ENCODE measurements at regions of chr1 and their contacts with region 1.

Region 1: GRCh38 chr1:32716312-32717148 is 14.0 kb upstream of the SYNC start:
- DNase-seq: peak; percentile 83
- CTCF ChIP-seq: no peak

Region 2: GRCh38 chr1:32521165-32521564 is 195.4 kb before region 1 on chr1:
- CTCF ChIA-PET with region 1: interaction called, 21 read pairs
- POLR2A ChIA-PET with region 1: interaction called, 4 read pairs
- DNase-seq: no peak
- CTCF ChIP-seq: no peak

Region 3: DNA sequence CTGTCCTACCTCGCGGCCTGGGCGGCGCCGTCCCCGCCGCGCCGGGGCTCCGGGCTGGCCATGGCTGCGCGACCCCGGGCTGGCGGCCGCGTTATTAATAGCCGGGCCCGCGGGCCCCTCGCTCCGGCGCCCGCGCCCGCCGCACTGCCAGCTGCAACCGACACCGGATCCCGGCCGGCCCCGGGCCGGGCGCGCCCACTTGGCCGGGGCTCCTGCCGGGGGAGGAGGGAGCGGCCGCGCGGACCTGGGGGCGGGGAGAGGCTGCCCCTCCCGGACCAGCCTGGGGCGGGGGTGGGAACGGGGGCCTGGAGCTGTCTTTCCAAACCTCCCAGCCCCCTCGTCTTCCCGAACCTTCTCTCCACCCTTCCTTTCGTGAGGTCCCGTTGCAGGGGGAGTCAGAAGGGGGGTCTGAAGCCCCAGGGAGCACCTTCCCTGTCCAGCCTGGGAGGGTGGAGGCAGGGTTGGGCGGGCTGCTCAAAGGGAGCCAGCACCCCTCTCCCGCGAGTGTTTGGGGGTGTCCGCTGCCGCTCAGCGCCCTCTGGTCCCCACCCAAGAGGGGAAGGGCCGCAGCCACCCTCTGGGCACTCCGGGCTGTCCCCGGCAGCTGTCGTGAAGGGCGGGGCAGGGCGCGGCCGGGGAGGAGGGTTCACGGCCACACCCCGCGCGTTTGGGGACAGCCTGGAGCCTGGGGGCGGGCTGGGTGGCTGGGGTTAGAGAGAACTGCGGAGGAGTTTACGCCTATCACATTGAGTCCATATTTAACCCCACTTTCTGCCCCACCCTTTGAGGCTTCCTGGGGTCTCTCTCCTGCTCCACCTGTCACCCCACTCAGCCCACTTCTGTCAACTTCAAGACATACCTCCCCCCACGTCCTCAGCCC is 13.7 kb before region 1 on chr1 and contains the start of gene SYNC:
- CTCF ChIA-PET with region 1: interaction called, 24 read pairs
- POLR2A ChIA-PET with region 1: no interaction called
- DNase-seq: peak; percentile 51
- CTCF ChIP-seq: no peak

Region 4: DNA sequence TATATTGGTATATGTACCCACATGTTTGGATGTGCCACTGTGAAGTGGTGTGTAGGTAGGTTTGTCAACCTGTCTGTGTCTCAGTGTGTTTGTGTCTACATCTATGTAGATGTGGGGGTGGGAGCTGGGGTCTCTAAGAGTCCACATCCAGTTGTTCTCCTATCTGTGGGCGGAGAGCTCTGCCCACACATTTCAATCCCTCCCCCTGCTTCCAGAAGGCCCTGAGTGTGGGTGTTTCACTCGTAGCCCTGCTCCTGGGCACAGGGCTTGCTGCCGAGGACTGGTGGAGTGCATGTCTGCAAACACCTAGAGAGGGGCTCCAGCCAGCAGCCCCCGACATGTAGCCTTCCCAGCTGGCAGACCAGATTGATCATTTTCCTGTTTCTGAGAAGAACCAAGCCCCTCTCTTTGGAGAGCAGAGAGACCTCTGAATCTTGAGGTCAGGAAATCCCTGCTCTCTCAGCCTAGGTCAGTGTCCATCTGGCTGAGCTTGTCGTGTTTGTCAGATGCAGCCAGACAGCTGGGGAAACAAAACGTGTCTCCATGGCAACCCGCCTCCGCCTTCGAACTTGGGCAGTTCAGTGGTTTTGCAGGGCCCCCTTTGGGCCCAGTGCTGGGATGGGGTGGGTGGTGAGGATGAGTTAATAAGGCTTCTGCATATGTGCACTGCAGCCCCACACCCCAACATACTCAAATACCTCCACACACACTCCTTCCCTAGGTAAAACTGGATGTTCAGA is 17.2 kb after region 1 on chr1:
- CTCF ChIA-PET with region 1: interaction called, 55 read pairs
- POLR2A ChIA-PET with region 1: no interaction called
- DNase-seq: peak; percentile 56
- CTCF ChIP-seq: no peak

Region 5: GRCh38 chr1:32741413-32742198 is 25.1 kb after region 1 on chr1:
- CTCF ChIA-PET with region 1: interaction called, 20 read pairs
- POLR2A ChIA-PET with region 1: no interaction called
- DNase-seq: no peak
- CTCF ChIP-seq: no peak

Region 6: GRCh38 chr1:32749771-32750170 is 33.2 kb after region 1 on chr1:
- CTCF ChIA-PET with region 1: interaction called, 20 read pairs
- POLR2A ChIA-PET with region 1: no interaction called
- DNase-seq: no peak
- CTCF ChIP-seq: no peak

Region 7: DNA sequence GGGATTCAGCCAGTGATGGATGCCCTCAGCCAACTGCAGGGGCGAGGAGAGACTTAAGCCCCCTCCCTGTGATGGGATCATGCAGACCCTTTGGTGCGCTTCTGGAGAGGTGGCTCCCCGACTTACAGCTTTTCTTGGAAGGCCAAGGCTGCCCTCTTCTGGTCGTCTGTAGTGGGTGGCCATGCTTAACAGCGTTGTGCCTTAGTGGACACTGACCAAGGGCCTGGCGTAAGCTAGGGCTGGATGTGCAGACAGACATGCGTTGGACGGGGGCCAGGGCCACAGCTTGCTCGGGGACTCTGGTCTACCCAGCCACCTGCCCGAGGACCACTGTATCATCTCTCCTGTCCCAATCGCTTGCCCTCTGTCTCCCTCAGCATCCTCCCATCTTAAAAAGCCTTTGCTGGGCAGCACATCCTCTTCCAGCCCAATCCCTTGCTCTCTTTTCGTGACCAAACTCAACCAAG is 369.9 kb after region 1 on chr1:
- CTCF ChIA-PET with region 1: interaction called, 10 read pairs
- POLR2A ChIA-PET with region 1: no interaction called
- DNase-seq: peak; percentile 62
- CTCF ChIP-seq: peak; percentile 81

Measured in GM10248 (cell line).